HepG2 (cell line): ENCODE measurements at regions of chr3 and their contacts with region 1.

Region 1: GRCh38 chr3:54951405-54951804 is 23.5 kb upstream of the LRTM1 start:
- DNase-seq: peak; percentile 3
- ATAC-seq: peak; percentile 95
- H3K4me3 ChIP-seq: no peak overlapping the region
- H3K27ac ChIP-seq: no peak overlapping the region
- H3K4me1 ChIP-seq: no peaks in the 10 kb centered on the region
- H3K27me3 ChIP-seq: peaks cover 1 to 5% of the 10 kb centered on the region in 2 experiments; a peak in 1 of 5 replicates
- CTCF ChIP-seq: peak; percentile 51
- EP300 ChIP-seq: no peak
- POLR2A ChIP-seq: no peak
- RAD21 ChIP-seq: no peak

Region 2: DNA sequence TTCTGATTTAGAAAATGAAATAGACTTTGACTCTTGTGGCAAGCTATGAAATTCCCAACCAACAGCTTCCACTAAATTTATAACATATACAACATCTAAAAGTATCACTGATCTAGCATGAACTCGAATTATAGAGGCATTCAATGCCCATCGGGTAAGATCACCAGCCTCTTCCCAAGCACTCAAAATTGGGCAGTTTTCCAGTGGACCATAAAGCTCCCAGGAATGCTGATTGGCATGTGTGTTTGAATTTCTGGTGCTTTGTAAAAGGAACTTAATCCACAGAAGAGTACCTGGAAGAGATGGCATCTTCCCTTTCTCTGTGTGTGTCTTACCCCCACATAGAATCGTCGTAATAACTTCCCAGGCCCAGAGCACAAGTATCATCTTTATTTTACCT is 33.5 kb before region 1 on chr3:
- CTCF ChIA-PET with region 1: no interaction called
- POLR2A ChIA-PET with region 1: no interaction called
- in situ Hi-C with region 1: no loop called
- intact Hi-C with region 1: no loop called
- DNase-seq: no peak
- ATAC-seq: no peak
- H3K4me3 ChIP-seq: no peak overlapping the region
- H3K27ac ChIP-seq: no peak overlapping the region
- H3K4me1 ChIP-seq: no peaks in the 10 kb centered on the region
- H3K27me3 ChIP-seq: no peaks in the 10 kb centered on the region; a peak in 1 of 5 replicates
- CTCF ChIP-seq: no peak
- EP300 ChIP-seq: no peak
- POLR2A ChIP-seq: no peak
- RAD21 ChIP-seq: no peak

Region 3: DNA sequence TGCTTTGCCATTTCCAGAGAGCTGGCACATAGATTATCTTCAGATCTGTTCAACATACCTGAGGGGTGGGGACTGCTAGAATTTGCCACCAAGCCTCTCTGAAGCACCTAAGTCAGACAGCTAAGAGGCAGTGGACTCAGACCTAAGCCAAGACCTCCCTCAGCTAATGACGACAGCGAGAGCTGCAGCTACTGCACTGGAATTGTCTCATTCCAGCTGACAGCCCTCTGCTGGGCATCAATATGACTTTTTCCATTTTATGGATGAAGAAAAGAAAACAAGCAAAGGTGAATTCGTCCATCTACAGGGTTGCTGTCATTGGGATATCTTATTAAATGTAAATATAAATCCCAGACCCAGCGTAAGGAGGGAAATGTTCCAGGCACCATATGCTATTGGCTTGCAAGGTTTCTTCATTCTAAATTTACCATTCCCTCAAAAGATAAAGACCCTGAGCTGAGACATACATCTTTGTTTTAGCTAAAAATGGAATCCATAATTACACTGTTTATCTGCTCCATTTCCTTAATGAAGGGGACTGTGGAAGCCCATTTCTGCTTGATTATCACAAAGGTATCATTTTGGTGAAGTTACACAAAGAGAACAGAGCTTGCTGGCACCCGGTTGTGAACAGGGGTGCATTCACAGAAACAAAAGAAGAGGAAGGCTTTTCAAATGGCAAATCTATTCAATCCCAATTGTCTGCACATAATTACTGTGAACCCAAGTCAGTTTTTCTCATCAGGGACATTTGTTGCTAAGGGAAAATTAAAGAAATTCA is 61.9 kb after region 1 on chr3:
- CTCF ChIA-PET with region 1: no interaction called
- POLR2A ChIA-PET with region 1: no interaction called
- in situ Hi-C with region 1: no loop called
- intact Hi-C with region 1: loop called (anchors 1 kb)
- DNase-seq: no peak
- ATAC-seq: peak; percentile 60
- H3K4me3 ChIP-seq: no peak overlapping the region
- H3K27ac ChIP-seq: no peak overlapping the region
- H3K4me1 ChIP-seq: no peaks in the 10 kb centered on the region
- H3K27me3 ChIP-seq: no peaks in the 10 kb centered on the region; a peak in 1 of 5 replicates
- CTCF ChIP-seq: no peak
- EP300 ChIP-seq: no peak
- POLR2A ChIP-seq: no peak
- RAD21 ChIP-seq: no peak

Region 4: DNA sequence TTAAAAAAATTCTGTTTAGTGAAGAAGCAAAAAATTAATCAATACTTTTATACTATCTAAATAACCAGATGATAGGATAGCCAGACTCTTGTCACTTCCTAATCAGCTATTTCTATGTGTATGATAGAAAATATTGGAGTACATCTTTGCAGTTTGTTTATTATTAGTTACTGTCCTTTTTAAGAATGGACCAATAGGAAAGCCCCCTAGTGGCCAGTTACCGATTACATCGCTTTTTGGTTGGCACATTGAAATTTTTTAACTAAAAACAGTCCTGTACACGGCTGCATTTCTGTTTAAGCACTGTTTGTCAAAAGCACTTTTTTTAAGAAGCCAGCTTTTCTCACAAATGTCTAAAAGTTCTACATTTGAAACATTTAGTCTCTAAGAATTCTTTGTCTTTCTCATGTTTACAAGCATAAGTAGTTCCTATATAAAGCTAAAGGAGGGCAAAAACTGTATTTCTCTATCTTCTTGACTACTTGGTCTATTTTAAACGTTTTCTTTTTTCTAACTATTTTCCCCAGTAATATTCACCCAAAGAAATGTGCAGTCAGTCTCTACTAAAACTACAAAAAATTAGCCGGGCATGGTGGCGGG is 229.6 kb after region 1 on chr3:
- CTCF ChIA-PET with region 1: no interaction called
- POLR2A ChIA-PET with region 1: no interaction called
- in situ Hi-C with region 1: no loop called
- intact Hi-C with region 1: loop called (anchors 2 kb)
- DNase-seq: peak; percentile 11
- ATAC-seq: no peak
- H3K4me3 ChIP-seq: no peak overlapping the region
- H3K27ac ChIP-seq: no peak overlapping the region
- H3K4me1 ChIP-seq: no peaks in the 10 kb centered on the region
- H3K27me3 ChIP-seq: no peaks in the 10 kb centered on the region; a peak in 1 of 5 replicates
- CTCF ChIP-seq: peak; percentile 44
- EP300 ChIP-seq: no peak
- POLR2A ChIP-seq: no peak
- RAD21 ChIP-seq: no peak